IMR-90 (cell line): ENCODE measurements at regions of chr9 and their contacts with region 1.

Region 1: DNA sequence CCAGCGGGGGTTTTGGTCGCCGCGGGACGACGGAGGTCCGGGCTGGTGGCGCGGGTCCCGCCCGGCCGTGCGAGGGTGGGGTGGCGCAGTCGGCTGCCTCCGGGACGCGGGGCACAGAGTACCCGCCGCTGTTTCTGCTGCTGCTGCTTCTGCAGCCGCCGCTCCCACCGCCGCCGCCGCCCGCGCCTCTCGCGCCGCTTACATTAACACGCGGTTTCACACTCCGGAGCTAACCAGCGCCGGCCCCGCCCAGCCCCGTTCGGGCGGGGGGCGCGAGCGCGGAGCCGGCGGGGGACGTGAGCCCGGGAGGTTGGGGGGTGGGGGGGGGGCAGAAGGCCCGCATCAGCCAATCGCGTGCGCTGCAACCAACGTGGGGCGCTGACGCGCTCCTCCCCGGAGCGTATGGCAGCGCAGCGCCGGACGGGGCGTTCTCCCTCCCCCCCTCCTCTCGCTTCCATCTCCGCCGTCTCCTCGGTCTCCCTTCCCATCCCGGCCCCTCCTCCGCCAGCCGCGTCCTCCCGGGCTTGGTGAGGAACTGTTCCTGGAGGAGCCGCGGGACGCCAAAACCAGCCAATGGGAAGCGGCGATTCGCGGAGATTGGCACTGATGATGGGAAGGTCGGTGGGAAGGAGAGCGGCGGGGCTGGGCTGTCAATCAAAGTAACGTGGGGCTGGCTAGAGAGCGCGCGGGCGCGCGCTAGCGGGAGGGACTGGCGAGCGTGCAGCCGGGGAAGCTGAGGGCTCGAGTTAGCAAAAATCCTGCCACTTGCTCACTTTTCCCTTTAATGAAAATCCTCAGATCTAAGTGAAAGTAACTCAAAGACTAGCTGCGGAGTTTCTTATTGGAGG is at the start of gene TLE1:
- DNase-seq: peak; percentile 100
- ATAC-seq: peak; percentile 90
- H3K4me3 ChIP-seq: peak within 1 kb of the TSS; percentile 98
- H3K27ac ChIP-seq: peak within 1 kb of the TSS; percentile 87
- H3K4me1 ChIP-seq: peaks cover 10% of the 10 kb centered on the region
- H3K27me3 ChIP-seq: no peaks in the 10 kb centered on the region
- CTCF ChIP-seq: no peak
- POLR2A ChIP-seq: peak; percentile 59
- RAD21 ChIP-seq: peak; percentile 36
- total RNA-seq, gene TLE1: 36.0 and 40.3 TPM in 2 replicates

Region 2: DNA sequence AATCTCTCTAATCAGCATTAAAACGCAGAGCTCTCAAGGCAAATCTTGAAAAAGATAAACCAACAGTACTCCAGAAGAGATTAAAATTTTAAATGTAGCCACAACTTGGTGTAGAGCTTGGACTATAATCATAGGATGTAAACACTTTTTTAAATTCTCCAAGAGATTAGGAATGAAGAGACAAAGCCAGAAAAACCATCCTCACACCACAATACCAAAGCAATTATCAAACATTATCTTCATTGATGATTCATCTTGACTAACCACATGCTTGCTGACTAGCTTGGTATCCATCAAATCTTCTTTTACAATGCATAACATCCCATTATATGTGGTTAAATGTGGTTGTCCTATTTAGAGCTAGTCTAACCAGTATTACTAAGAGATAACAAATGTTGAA is 815.3 kb before region 1 on chr9:
- CTCF ChIA-PET with region 1: no interaction called
- POLR2A ChIA-PET with region 1: no interaction called
- dilution Hi-C with region 1: no loop called
- in situ Hi-C with region 1: no loop called
- intact Hi-C with region 1: loop called (anchors 5 kb)
- DNase-seq: peak; percentile 89
- ATAC-seq: peak; percentile 80
- H3K4me3 ChIP-seq: no peak overlapping the region
- H3K27ac ChIP-seq: no peak overlapping the region; the same call in 1 of the 2 replicates
- H3K4me1 ChIP-seq: no peaks in the 10 kb centered on the region; the same call in 1 of the 2 replicates
- H3K27me3 ChIP-seq: no peaks in the 10 kb centered on the region
- CTCF ChIP-seq: no peak
- POLR2A ChIP-seq: no peak
- RAD21 ChIP-seq: no peak

Region 3: DNA sequence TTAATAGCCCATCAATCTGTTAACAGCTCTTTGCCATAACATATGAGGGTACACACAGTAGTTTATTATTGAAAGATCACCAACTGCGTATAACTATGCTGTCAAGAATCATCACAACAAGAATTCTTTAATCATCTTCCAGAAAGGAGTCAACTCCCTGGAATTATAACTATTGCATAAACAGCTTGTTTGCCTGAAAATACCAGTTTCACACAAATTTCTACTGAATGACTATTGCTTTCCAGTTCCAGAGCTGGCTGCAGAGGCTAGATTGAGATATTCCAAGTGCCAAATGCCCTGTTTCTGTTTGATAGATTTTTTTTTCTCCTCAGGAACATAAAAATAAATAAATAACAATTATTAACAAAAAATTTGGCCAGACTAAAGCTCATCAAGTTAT is 444.9 kb before region 1 on chr9:
- CTCF ChIA-PET with region 1: no interaction called
- POLR2A ChIA-PET with region 1: no interaction called
- dilution Hi-C with region 1: no loop called
- in situ Hi-C with region 1: no loop called
- intact Hi-C with region 1: loop called (anchors 10 kb)
- DNase-seq: peak; percentile 47
- ATAC-seq: peak; percentile 73
- H3K4me3 ChIP-seq: no peak overlapping the region
- H3K27ac ChIP-seq: no peak overlapping the region
- H3K4me1 ChIP-seq: no peaks in the 10 kb centered on the region; the same call in 1 of the 2 replicates
- H3K27me3 ChIP-seq: no peaks in the 10 kb centered on the region
- CTCF ChIP-seq: no peak
- POLR2A ChIP-seq: no peak
- RAD21 ChIP-seq: no peak

Region 4: GRCh38 chr9:81256368-81256767 is 433.2 kb before region 1 on chr9:
- CTCF ChIA-PET with region 1: no interaction called
- POLR2A ChIA-PET with region 1: no interaction called
- dilution Hi-C with region 1: no loop called
- in situ Hi-C with region 1: no loop called
- intact Hi-C with region 1: no loop called
- DNase-seq: no peak
- ATAC-seq: no peak
- H3K4me3 ChIP-seq: no peak overlapping the region
- H3K27ac ChIP-seq: no peak overlapping the region
- H3K4me1 ChIP-seq: no peaks in the 10 kb centered on the region
- H3K27me3 ChIP-seq: peaks cover 9% of the 10 kb centered on the region; the same call in 1 of the 2 replicates
- CTCF ChIP-seq: no peak
- POLR2A ChIP-seq: no peak
- RAD21 ChIP-seq: no peak

Region 5: DNA sequence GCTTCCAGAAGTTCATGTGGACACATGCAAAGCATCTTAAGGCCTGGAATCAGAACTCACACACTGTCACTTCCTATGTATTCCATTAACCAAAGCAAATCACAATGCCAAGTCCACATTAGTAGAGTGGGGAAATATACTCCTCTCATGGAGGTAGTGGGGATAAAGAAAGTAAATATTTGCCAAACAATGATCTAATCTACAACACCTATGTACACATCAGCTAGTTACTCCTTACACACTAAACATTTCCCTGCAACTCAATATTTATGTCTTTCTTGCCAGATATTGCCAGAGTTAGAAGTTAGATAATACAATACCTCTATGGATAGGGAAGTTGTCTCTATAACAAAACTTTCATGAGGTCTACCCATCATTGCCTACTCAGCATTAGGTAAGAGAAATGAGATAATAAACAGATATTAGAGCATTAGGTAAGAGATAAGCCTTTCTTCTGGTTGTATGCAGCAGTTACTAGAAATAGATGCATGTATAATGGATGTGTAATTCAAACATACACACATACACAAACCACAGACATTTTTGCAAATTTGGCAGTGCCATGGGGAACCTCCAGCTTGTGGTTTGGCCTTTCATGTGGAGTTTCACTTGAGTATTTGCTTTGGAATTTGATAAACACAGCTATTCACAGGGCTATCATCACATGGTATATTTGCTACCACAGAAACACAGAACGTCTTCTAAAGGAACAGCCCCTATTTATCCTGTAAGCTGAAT is 196.7 kb before region 1 on chr9:
- CTCF ChIA-PET with region 1: no interaction called
- POLR2A ChIA-PET with region 1: no interaction called
- dilution Hi-C with region 1: no loop called
- in situ Hi-C with region 1: loop called (anchors 10 kb)
- intact Hi-C with region 1: no loop called
- DNase-seq: peak; percentile 100
- ATAC-seq: peak; percentile 92
- H3K4me3 ChIP-seq: no peak overlapping the region
- H3K27ac ChIP-seq: no peak overlapping the region
- H3K4me1 ChIP-seq: peaks cover 7% of the 10 kb centered on the region
- H3K27me3 ChIP-seq: no peaks in the 10 kb centered on the region; the same call in none of the 2 replicates
- CTCF ChIP-seq: no peak
- POLR2A ChIP-seq: no peak
- RAD21 ChIP-seq: no peak

Region 6: GRCh38 chr9:82031322-82032280 is 342.0 kb after region 1 on chr9:
- CTCF ChIA-PET with region 1: no interaction called
- POLR2A ChIA-PET with region 1: no interaction called
- dilution Hi-C with region 1: no loop called
- in situ Hi-C with region 1: no loop called
- intact Hi-C with region 1: loop called (anchors 10 kb)
- DNase-seq: peak; percentile 88
- ATAC-seq: peak; percentile 79
- H3K4me3 ChIP-seq: no peak overlapping the region
- H3K27ac ChIP-seq: no peak overlapping the region
- H3K4me1 ChIP-seq: peaks cover 4% of the 10 kb centered on the region; the same call in 1 of the 2 replicates
- H3K27me3 ChIP-seq: no peaks in the 10 kb centered on the region
- CTCF ChIP-seq: no peak
- POLR2A ChIP-seq: no peak
- RAD21 ChIP-seq: no peak

Region 7: GRCh38 chr9:82134010-82134409 is 444.4 kb after region 1 on chr9:
- CTCF ChIA-PET with region 1: no interaction called
- POLR2A ChIA-PET with region 1: no interaction called
- dilution Hi-C with region 1: no loop called
- in situ Hi-C with region 1: no loop called
- intact Hi-C with region 1: no loop called
- DNase-seq: peak; percentile 50
- ATAC-seq: peak; percentile 62
- H3K4me3 ChIP-seq: no peak overlapping the region
- H3K27ac ChIP-seq: no peak overlapping the region
- H3K4me1 ChIP-seq: peaks cover 5% of the 10 kb centered on the region
- H3K27me3 ChIP-seq: no peaks in the 10 kb centered on the region
- CTCF ChIP-seq: no peak
- POLR2A ChIP-seq: no peak
- RAD21 ChIP-seq: no peak